Endothelial cell of umbilical vein (primary cell): ENCODE measurements at regions of chr17 and their contacts with region 1.

Region 1: GRCh38 chr17:59331129-59331928 is at the start of gene YPEL2:
- DNase-seq: peak; percentile 96
- H3K4me3 ChIP-seq: peak within 1 kb of the TSS; percentile 27 to 98 (median 75)
- H3K27ac ChIP-seq: peak within 1 kb of the TSS; percentile 69
- H3K4me1 ChIP-seq: peaks cover 53% of the 10 kb centered on the region
- H3K27me3 ChIP-seq: no peaks in the 10 kb centered on the region
- CTCF ChIP-seq: no peak
- POLR2A ChIP-seq: peak; percentile 57
- total RNA-seq, gene YPEL2: 59.5 and 66.8 TPM in 2 replicates

Region 2: DNA sequence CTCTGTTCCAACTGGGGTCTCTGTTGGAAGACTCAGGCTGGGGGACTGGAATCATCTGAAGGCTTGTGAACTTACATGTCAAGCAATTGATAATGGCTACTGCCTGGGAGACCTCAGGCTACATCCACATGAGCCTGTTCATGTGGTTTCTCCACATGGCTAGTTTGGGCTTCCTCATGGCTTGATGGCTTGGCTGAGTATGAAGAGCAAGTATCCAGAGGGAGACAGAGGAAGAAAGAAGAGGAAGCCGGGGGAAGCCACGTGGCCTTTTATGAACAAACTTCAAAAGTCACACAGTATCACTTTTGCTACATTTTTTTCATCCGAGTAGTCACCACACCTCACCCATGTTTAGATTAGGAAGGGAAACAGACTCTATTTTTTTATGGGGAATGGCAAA is 383.5 kb before region 1 on chr17:
- CTCF ChIA-PET with region 1: no interaction called
- POLR2A ChIA-PET with region 1: no interaction called
- dilution Hi-C with region 1: no loop called
- intact Hi-C with region 1: no loop called
- DNase-seq: no peak
- H3K4me3 ChIP-seq: no peak overlapping the region
- H3K27ac ChIP-seq: no peak overlapping the region
- H3K4me1 ChIP-seq: no peaks in the 10 kb centered on the region
- H3K27me3 ChIP-seq: no peaks in the 10 kb centered on the region
- CTCF ChIP-seq: no peak
- POLR2A ChIP-seq: no peak

Region 3: GRCh38 chr17:59311130-59311920 is 20.0 kb before region 1 on chr17:
- CTCF ChIA-PET with region 1: interaction called, 23 read pairs
- POLR2A ChIA-PET with region 1: interaction called, 4 read pairs
- dilution Hi-C with region 1: no loop called
- intact Hi-C with region 1: no loop called
- DNase-seq: peak; percentile 79
- H3K4me3 ChIP-seq: no peak overlapping the region
- H3K27ac ChIP-seq: no peak overlapping the region
- H3K4me1 ChIP-seq: no peaks in the 10 kb centered on the region
- H3K27me3 ChIP-seq: no peaks in the 10 kb centered on the region
- CTCF ChIP-seq: peak; percentile 64 to 67
- POLR2A ChIP-seq: no peak

Region 4: GRCh38 chr17:59378458-59379074 is 47.2 kb after region 1 on chr17:
- CTCF ChIA-PET with region 1: interaction called, 17 read pairs
- POLR2A ChIA-PET with region 1: no interaction called
- dilution Hi-C with region 1: no loop called
- intact Hi-C with region 1: loop called (anchors 1 kb)
- DNase-seq: peak; percentile 93
- H3K4me3 ChIP-seq: no peak overlapping the region
- H3K27ac ChIP-seq: peak overlapping the region; percentile 84
- H3K4me1 ChIP-seq: peaks cover 59% of the 10 kb centered on the region
- H3K27me3 ChIP-seq: no peaks in the 10 kb centered on the region
- CTCF ChIP-seq: no peak
- POLR2A ChIP-seq: no peak

Region 5: DNA sequence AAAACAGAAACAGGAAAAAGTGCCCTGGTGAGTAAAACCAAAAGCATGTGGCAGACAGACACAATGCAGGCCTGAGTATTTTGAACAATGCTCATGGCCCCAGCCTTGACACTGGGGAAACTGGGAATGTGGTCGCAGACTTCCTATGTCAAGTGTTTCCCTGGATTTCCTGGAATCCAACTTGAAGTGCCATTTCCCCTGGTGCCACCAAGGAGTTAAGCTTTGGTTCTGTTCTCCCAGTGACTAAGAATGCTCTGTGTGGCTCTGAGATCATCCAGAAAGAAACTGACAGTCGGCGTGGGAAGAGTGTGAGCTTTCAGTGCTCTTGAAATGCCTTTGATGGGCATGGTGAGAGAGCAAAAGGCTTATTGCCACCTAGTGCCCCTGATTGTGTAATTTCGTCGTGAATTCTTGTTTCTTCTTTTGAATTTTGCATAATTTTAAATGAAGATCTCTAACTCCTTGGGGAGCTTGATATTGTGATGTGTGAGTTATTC is 96.1 kb after region 1 on chr17:
- CTCF ChIA-PET with region 1: interaction called, 27 read pairs
- POLR2A ChIA-PET with region 1: interaction called, 4 read pairs
- dilution Hi-C with region 1: loop called (anchors 25 kb)
- intact Hi-C with region 1: loop called (anchors 1 kb)
- DNase-seq: peak; percentile 98
- H3K4me3 ChIP-seq: peak overlapping the region in 1 of 3 experiments; percentile 2
- H3K27ac ChIP-seq: peak overlapping the region; percentile 91
- H3K4me1 ChIP-seq: peaks cover 68% of the 10 kb centered on the region
- H3K27me3 ChIP-seq: no peaks in the 10 kb centered on the region
- CTCF ChIP-seq: no peak
- POLR2A ChIP-seq: peak; percentile 59

Region 6: DNA sequence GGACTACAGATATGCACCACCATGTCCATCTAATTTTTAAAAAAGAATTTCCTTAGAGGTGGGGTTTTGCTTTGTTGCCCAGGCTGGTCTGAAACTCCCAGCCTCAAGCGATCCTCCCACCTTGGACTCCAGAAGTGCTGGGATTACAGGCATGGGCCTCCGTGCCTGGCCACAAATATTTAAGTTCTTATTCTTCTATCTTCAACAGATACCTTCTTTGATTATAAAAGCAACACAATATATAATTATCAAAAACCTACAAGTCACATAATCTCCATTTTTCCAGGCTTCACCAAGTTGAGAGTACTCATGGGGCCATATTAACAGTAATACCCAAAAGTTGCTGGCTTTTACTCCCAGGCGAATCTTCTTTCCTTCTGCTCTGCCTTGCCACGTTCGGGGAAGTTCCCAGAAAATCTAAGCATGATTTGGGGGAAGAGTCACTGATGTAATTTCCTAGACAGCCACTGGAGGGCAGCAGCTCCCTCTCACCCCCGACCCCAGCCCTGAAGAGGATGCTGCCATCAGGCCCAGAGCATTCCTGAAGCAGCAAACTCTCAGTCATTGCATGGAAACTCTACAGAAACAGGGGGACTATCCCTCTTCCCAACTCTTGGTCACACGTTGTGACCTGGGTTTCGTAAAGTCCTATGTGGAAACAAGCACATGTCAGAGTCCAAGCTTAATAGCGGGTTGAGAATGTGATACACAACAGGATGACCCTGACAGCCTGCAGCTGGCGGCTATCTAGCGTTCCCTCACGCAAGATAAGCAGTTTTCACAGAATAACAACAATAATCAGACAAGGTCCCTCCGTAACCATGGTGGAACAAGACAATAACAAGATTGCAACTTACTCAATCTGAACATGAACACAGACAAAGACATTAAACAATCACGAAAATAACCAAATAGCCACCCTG is 190.1 kb after region 1 on chr17:
- CTCF ChIA-PET with region 1: interaction called, 22 read pairs
- POLR2A ChIA-PET with region 1: interaction called, 3 read pairs
- dilution Hi-C with region 1: no loop called
- intact Hi-C with region 1: loop called (anchors 1 kb)
- DNase-seq: peak; percentile 72
- H3K4me3 ChIP-seq: no peak overlapping the region
- H3K27ac ChIP-seq: no peak overlapping the region
- H3K4me1 ChIP-seq: no peaks in the 10 kb centered on the region
- H3K27me3 ChIP-seq: peaks cover 2 to 7% of the 10 kb centered on the region in 2 experiments
- CTCF ChIP-seq: peak; percentile 75 to 79
- POLR2A ChIP-seq: no peak

Region 7: GRCh38 chr17:59668816-59669215 is 337.5 kb after region 1 on chr17:
- CTCF ChIA-PET with region 1: no interaction called
- POLR2A ChIA-PET with region 1: no interaction called
- dilution Hi-C with region 1: no loop called
- intact Hi-C with region 1: loop called (anchors 5 kb)
- DNase-seq: peak; percentile 94
- H3K4me3 ChIP-seq: peak overlapping the region in 2 of 3 experiments; percentile 36 to 58
- H3K27ac ChIP-seq: peak overlapping the region; percentile 96
- H3K4me1 ChIP-seq: peaks cover 55% of the 10 kb centered on the region
- H3K27me3 ChIP-seq: no peaks in the 10 kb centered on the region
- CTCF ChIP-seq: no peak
- POLR2A ChIP-seq: no peak